ENCODE measurements at regions of chr1 and their contacts with region 1.

Region 1: GRCh38 chr1:9004700-9005394 is 21.4 kb downstream of the SLC2A7 start:
- DNase-seq: peak; percentile 92
- ATAC-seq: peak; percentile 82

Region 2: GRCh38 chr1:8913111-8913856 is 91.6 kb before region 1 on chr1:
- intact Hi-C with region 1: loop called (anchors 2 kb)
- DNase-seq: no peak
- ATAC-seq: no peak

Region 3: DNA sequence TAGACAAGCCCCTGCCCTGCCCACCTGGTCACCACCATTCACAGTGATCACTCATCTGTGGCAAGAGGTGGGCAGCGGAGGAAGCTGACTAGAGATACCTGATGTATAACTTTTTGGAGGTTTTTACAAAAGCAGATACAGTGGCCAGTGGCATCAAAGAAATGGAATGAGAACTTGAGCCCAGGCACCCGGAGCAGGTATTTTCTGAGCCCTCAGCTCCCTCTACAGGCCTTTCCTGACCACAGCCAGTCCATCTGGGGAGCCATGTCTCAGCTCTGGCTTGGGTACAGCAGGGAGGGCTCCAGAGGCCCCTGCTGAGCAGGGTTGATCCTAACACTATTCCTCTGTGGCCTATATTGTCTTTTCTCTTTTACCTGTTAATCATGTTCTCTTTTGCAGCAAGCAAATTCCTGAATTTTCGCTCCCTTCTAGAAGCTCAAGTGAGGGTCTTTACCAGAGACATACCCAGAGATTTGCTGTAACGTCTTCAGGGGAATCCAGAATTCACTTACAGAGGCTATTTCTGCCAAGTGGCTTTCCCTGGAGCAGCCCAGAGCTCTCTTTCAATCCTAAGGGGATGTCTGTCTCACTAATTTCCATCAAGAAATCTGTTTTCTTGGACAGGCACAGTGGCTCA is 96.8 kb after region 1 on chr1:
- intact Hi-C with region 1: loop called (anchors 2 kb)
- DNase-seq: no peak
- ATAC-seq: peak; percentile 64

Region 4: GRCh38 chr1:9196129-9197040 is 191.5 kb after region 1 on chr1:
- intact Hi-C with region 1: loop called (anchors 10 kb)
- DNase-seq: peak; percentile 83
- ATAC-seq: peak; percentile 73